Right ventricle myocardium inferior (tissue), 1 donor: ENCODE measurements at regions of chrX and their contacts with region 1.

Region 1: GRCh38 chrX:140057001-140057411 is 91.7 kb upstream of the CXorf66 start:
- DNase-seq: peak; percentile 74
- ATAC-seq: peak; percentile 62

Region 2: GRCh38 chrX:139982856-139983255 is 74.2 kb before region 1 on chrX:
- intact Hi-C with region 1: no loop called
- DNase-seq: no peak
- ATAC-seq: no peak

Region 3: DNA sequence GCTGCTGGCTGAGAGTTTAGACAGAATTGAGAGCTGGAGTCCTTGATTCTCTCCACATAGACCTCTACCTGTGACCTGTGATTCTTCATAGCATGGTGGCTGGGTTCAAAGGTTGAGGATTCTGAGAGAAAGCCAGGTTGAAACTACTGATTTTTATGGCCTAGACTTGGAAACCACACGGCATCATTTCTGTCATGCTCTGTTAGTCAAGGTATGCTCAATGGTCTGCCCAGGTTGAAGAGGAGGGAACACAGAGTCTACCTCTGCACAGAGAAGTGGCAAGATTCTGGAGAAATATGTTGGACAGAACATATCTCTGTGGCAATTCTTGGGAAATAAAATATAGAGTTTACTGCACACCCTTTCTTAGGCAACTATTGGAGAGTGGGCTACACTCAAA is 34.5 kb before region 1 on chrX:
- intact Hi-C with region 1: no loop called
- DNase-seq: no peak
- ATAC-seq: no peak

Region 4: DNA sequence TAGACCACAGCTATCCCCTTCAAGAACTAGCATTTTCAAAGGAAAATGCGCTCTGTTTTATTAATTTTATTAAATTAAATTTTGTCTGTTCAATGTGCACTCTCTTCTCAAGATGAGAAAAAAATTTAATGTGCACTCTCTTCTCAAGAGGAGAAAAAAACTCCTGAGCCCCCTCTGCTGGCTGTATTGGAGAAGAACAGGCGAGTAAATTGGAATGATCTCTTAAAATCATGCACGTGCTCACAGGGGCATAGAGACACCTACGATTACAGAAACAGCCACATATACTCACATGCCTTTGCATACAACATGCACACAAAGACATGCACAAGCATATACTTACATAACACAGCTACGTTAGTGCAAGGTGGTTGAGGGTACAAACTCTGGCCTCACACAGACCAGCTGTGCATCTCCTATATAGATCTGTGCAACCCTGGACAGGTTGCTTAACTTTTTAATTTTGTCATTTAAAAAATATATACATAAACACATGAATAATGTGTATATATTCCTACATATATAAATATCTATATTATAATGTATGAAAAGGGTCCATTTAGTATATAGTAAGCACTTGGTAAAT is 84.5 kb after region 1 on chrX:
- intact Hi-C with region 1: loop called (anchors 5 kb)
- DNase-seq: no peak
- ATAC-seq: no peak

Region 5: GRCh38 chrX:140503714-140504351 is 446.8 kb after region 1 on chrX:
- intact Hi-C with region 1: loop called (anchors 10 kb)
- DNase-seq: no peak
- ATAC-seq: peak; percentile 62

Region 6: GRCh38 chrX:140664939-140665338 is 607.9 kb after region 1 on chrX:
- intact Hi-C with region 1: loop called (anchors 5 kb)
- DNase-seq: no peak
- ATAC-seq: no peak